ENCODE measurements at regions of chr2 and their contacts with region 1.

Region 1: DNA sequence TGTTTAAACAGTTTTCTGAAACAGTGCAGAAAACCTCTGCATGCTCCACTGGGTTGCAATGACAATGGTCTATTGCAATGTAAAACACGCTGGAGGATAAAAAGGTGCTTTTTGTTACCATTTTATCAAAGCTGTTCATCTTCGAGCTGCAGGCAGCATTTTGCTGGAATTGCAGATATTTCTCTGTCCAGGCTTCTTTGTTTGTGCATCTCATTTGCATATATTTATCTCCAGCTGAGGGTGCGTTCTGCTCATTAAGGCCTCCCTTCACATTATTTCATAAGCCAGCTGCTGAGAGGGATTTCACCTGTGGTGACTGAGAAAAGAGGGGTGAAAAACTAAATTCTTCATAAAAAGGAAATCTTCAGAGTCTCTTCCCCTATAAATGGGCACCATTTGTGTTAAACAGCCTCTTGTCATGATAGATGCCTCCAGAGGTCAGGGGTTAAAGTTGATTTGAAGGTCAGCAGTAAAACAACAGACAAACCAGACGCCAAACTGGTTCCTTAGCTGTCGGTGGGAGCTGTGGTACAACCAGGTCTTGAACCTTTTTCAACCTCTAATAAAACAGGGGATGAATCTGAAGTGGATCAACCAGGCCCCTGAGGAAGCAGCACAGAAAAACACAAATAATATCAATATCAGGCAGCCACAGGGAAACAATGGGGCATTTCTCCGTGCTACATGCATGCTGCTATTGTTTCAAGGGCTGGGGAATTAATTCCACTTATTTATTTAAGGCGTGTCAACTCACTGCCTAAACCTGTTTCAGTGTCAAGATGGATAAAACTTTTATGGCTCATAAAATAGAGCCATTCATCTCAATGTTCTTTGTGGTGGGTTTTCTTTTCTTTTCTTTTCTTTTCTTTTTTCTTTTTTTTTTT is 265.1 kb downstream of the MEIS1 start:
- DNase-seq: no peak
- H3K4me3 ChIP-seq: peak overlapping the region in 2 of 4 donors; percentile 6 to 8
- H3K27ac ChIP-seq: peak overlapping the region; percentile 78 to 85 (median 84)
- H3K4me1 ChIP-seq: peaks cover 0 to 75% (median 70%) of the 10 kb centered on the region in 4 donors
- H3K27me3 ChIP-seq: no peaks in the 10 kb centered on the region
- CTCF ChIP-seq: no peak
- EP300 ChIP-seq: no peak
- POLR2A ChIP-seq: no peak

Region 2: DNA sequence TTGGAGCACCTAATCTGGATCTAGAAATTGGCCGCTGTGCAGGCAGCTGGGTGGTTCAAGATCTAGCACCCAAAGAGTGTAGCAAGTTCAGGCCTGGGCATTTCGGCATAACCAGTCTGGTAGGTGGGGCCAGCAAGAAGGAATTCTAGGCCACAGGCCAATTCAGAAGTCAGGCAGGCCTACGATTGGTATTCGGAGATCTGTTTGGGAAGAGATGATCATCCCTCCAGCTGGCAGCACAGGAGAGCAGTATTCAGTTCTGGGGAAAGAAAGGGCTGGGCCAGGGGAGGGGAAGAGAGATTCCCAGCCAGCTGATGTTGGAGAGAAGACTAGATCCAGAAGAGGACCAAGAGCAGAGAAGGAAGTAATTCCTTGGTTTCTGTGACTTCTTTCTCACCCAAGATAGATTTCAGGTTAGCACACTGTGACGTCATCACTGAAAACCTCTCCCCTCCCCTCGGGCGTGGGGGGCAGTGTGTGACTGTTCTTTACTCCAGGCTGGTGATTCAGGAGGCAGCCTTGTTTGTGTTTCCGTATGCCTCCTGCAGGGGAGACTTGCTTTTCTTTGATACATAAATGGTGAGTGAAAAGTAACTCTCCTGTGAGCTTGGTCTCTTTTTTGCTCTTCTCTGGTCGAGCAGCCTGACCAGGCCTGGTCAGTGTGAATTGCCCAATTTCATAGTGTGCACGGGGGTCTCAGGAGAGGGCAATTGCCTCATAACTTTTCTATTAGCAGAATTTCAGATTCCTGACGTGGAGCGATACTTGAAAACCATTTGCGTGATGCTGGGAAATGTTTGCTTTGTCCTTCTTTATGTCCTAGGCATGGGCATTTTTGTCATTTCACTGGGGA is 204.0 kb before region 1 on chr2:
- intact Hi-C with region 1: no loop called
- DNase-seq: no peak
- H3K4me3 ChIP-seq: peak overlapping the region in 2 of 4 donors; percentile 0 to 13
- H3K27ac ChIP-seq: peak overlapping the region; percentile 55 to 76 (median 64)
- H3K4me1 ChIP-seq: peaks cover 49 to 100% (median 100%) of the 10 kb centered on the region in 4 donors
- H3K27me3 ChIP-seq: no peaks in the 10 kb centered on the region
- CTCF ChIP-seq: peak in 1 of 3 experiments; percentile 13
- EP300 ChIP-seq: no peak
- POLR2A ChIP-seq: no peak

Region 3: GRCh38 chr2:66729416-66730300 is 29.6 kb after region 1 on chr2:
- intact Hi-C with region 1: no loop called
- DNase-seq: no peak
- H3K4me3 ChIP-seq: no peak overlapping the region
- H3K27ac ChIP-seq: no peak overlapping the region
- H3K4me1 ChIP-seq: peaks cover 0 to 13% (median 5%) of the 10 kb centered on the region in 4 donors
- H3K27me3 ChIP-seq: no peaks in the 10 kb centered on the region
- CTCF ChIP-seq: no peak
- EP300 ChIP-seq: no peak
- POLR2A ChIP-seq: no peak

Region 4: DNA sequence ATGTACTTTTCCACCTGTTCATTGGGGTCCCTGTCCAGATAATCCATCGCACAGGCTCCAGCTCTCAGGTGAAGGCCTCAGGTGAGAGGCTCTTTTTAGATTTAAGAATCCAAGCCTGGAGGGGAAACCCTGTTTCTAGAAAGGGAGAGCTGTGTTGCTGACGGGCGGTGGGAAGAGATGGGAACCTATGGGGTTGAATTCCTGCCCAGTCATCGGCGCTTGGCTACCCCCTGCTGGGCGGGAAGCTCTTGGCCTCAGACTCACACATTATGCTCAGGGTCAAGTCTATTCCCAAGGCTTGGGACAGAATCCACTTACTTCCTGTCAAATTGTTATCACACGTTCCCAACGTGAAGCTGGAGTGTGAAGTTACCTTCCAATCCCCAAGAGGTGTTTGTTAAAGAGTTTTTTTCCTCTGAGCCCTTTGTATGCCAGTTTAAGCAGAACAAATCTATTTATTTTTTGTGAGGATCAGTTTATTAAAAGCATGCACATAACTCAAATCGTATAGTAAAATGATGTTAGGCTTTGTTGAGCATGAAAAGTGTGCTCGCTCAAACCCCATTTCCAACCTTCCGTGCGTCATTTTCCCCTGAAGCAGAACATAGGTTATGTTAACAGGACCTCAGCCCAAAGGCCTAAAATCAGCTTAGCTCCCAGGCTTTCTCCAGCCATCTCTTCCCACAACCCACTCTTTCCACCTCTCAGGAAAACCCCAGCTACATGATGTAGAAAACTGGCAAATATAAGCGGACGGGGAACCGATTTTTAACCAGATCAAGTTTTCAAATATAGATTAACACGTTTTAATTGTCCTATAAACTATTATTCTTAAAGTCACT is 515.4 kb after region 1 on chr2:
- intact Hi-C with region 1: loop called (anchors 10 kb)
- DNase-seq: no peak
- H3K4me3 ChIP-seq: no peak overlapping the region
- H3K27ac ChIP-seq: peak overlapping the region; percentile 62 to 75 (median 73)
- H3K4me1 ChIP-seq: peaks cover 0 to 26% (median 25%) of the 10 kb centered on the region in 4 donors
- H3K27me3 ChIP-seq: no peaks in the 10 kb centered on the region
- CTCF ChIP-seq: peak; percentile 38 to 58 (median 55)
- EP300 ChIP-seq: no peak
- POLR2A ChIP-seq: no peak

Measured in esophagus muscularis mucosa (tissue), 4 donors.